ENCODE measurements at regions of chr10 and their contacts with region 1.

Region 1: DNA sequence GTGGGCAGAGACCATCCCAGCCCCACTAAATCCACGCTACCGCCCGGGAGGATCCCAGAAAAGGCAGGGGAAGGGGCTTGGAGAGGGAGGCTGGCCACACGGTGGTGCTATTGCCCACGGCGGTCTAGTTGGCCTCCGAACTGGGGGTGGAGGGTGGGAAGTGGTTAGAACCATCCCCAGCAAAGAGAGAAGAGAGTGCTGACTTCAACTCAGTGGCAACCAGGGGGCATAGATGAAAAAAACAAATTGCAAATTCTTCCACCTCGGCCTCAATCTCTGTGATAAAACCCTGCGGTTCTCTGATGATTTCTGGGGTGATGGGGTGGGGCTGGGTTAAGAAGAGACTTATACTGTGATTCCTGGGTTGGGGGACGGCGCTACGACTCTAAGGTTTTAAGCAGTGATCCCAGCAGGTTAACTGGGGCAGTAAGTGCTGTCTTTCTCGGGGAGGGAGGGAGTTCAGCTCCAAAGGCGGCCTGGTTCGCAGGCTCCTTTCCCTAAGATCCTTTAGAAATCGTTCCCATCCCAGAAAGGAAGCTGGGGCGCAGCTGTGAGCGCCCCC is 154.5 kb upstream of the LYZL2 start:
- DNase-seq: peak; percentile 22
- ATAC-seq: peak; percentile 90
- H3K4me3 ChIP-seq: no peak overlapping the region
- H3K27ac ChIP-seq: no peak overlapping the region
- H3K4me1 ChIP-seq: 0 out of 2 replicates have a peak, but pooled peaks cover 7% of the 10 kb centered on the region
- H3K27me3 ChIP-seq: peaks cover 0 to 62% of the 10 kb centered on the region in 2 experiments; a peak in 4 of 5 replicates
- CTCF ChIP-seq: peak; percentile 86
- EP300 ChIP-seq: no peak
- POLR2A ChIP-seq: no peak
- RAD21 ChIP-seq: peak; percentile 75

Region 2: GRCh38 chr10:31242902-31243301 is 458.9 kb after region 1 on chr10:
- CTCF ChIA-PET with region 1: no interaction called
- POLR2A ChIA-PET with region 1: no interaction called
- in situ Hi-C with region 1: no loop called
- intact Hi-C with region 1: no loop called
- DNase-seq: peak; percentile 59
- ATAC-seq: peak; percentile 88
- H3K4me3 ChIP-seq: no peak overlapping the region
- H3K27ac ChIP-seq: no peak overlapping the region
- H3K4me1 ChIP-seq: peaks cover 10% of the 10 kb centered on the region
- H3K27me3 ChIP-seq: no peaks in the 10 kb centered on the region; a peak in 1 of 5 replicates
- CTCF ChIP-seq: no peak
- EP300 ChIP-seq: peak in 1 of 2 experiments; percentile 30; a peak in 1 of 4 replicates
- POLR2A ChIP-seq: no peak
- RAD21 ChIP-seq: no peak

Region 3: DNA sequence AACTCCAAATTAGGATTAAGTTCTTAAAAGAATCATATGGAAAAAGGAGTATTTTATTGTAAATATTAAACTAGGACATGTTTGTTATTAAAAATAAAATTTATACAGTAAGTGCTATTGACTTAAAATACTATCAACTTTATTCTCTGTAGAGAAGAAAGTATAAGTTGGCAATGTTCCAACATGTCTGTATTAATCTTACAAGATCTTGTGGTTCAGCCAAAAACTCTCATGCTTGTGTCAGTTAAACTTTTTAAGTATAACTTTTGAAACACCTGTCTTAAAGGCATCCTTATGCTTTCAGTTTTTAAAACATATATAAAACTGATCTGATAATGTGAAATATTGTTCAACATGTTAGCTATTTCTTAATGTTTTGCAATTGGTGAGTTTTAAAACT is 695.7 kb after region 1 on chr10:
- CTCF ChIA-PET with region 1: no interaction called
- POLR2A ChIA-PET with region 1: no interaction called
- in situ Hi-C with region 1: loop called (anchors 10 kb)
- intact Hi-C with region 1: no loop called
- DNase-seq: no peak
- ATAC-seq: no peak
- H3K4me3 ChIP-seq: no peak overlapping the region
- H3K27ac ChIP-seq: no peak overlapping the region
- H3K4me1 ChIP-seq: no peaks in the 10 kb centered on the region
- H3K27me3 ChIP-seq: no peaks in the 10 kb centered on the region
- CTCF ChIP-seq: no peak
- EP300 ChIP-seq: no peak
- POLR2A ChIP-seq: no peak
- RAD21 ChIP-seq: no peak

Region 4: GRCh38 chr10:31759799-31760626 is 976.0 kb after region 1 on chr10:
- CTCF ChIA-PET with region 1: no interaction called
- POLR2A ChIA-PET with region 1: no interaction called
- in situ Hi-C with region 1: loop called (anchors 25 kb)
- intact Hi-C with region 1: no loop called
- DNase-seq: peak; percentile 85
- ATAC-seq: peak; percentile 94
- H3K4me3 ChIP-seq: peak overlapping the region; percentile 76 to 89 (median 85)
- H3K27ac ChIP-seq: peak overlapping the region; percentile 77
- H3K4me1 ChIP-seq: peaks cover 20% of the 10 kb centered on the region
- H3K27me3 ChIP-seq: peaks cover under 1 to 3% of the 10 kb centered on the region in 2 experiments; a peak in 3 of 5 replicates
- CTCF ChIP-seq: no peak
- EP300 ChIP-seq: no peak
- POLR2A ChIP-seq: peak; percentile 59 to 69; a peak in 3 of 4 replicates
- RAD21 ChIP-seq: no peak